ENCODE measurements at regions of chrX and their contacts with region 1.

Region 1: GRCh38 chrX:152632445-152633097 is 5.1 kb upstream of the GABRQ start:
- DNase-seq: peak; percentile 55
- ATAC-seq: no peak
- H3K4me3 Mint-ChIP-seq: no peak overlapping the region
- H3K27ac Mint-ChIP-seq: no peak overlapping the region
- H3K4me1 Mint-ChIP-seq: no peaks in the 10 kb centered on the region
- H3K27me3 Mint-ChIP-seq: peaks cover 7% of the 10 kb centered on the region
- CTCF ChIP-seq: peak; percentile 58

Region 2: DNA sequence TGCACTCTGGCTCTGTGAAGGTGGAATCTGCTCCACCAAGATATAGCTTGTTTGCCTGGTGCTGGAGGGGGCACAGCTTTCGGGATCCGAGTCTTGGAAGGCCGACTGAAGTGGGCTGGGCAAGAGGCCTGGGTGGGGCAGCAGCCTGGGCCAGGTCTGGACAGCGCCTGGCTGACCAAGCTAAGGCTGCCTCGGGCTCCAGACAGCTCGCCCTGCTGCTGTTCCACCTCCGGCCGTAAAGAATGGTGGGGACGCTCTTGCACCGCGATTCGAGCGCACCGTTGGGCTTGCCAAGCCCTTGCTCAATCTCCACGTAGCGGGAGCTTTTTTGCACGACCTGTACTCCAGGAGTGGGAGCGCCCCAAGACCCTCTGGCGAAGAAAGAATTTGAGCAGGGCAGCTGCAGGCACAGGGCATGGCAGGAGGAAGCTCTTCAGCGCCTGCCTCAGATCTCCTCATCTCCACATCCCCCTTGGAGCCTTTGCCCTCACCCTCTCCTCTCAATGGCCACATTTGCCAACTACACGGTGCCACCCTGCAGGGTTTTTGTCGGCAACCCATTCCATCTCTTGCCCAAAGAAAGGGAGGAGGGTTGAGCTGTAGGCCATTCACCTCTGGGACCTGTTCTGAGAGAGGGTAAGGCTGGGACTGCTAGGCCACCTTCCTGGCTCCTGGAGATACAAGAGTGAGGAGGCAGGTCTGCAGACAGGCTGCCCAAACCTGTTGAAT is 879.1 kb before region 1 on chrX:
- CTCF ChIA-PET with region 1: interaction called, 10 read pairs
- POLR2A ChIA-PET with region 1: no interaction called
- intact Hi-C with region 1: no loop called
- DNase-seq: peak; percentile 20
- ATAC-seq: peak; percentile 58
- H3K4me3 Mint-ChIP-seq: no peak overlapping the region
- H3K27ac Mint-ChIP-seq: no peak overlapping the region
- H3K4me1 Mint-ChIP-seq: no peaks in the 10 kb centered on the region
- H3K27me3 Mint-ChIP-seq: peaks cover 3% of the 10 kb centered on the region
- CTCF ChIP-seq: peak; percentile 41

Region 3: DNA sequence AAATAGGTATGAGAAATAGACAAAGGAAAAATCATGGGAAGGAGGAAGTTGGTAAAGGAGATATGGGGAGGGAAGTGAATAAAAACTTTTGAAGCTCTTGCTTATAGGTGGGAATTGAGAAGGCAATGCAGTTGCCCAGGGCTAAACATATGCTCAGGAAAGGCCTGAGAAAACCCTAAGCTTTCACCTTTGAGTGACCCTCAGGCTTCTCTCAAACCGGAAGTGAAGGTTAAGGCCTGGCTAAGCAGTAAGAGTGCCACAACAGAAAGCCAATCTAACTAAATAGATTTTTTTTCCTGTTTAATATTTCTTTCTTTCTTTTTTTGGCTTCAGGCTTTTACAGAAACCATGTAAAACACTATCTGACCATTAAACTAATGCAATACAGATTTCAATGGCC is 111.9 kb before region 1 on chrX:
- CTCF ChIA-PET with region 1: no interaction called
- POLR2A ChIA-PET with region 1: no interaction called
- intact Hi-C with region 1: no loop called
- DNase-seq: no peak
- ATAC-seq: no peak
- H3K4me3 Mint-ChIP-seq: no peak overlapping the region
- H3K27ac Mint-ChIP-seq: no peak overlapping the region
- H3K4me1 Mint-ChIP-seq: no peaks in the 10 kb centered on the region
- H3K27me3 Mint-ChIP-seq: no peaks in the 10 kb centered on the region
- CTCF ChIP-seq: no peak

Region 4: DNA sequence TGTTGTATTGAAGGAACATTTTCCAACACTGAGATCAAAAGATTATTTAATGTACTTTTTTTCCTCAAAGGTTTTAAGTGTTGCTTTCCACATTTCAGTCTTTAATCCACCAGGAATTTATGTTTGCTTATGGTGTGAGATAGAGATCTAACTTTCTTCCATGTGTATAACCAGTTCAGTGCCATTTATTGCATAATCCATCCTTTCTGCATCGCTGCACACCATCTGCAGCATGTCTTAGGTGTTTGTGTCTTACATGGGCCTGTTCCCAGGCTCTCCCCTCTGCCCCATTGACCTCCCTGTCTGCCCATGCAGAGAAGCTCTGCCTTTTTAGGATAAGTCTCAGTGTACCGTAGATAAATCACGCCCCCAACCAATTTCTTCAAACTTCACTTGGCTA is 228.5 kb after region 1 on chrX:
- CTCF ChIA-PET with region 1: no interaction called
- POLR2A ChIA-PET with region 1: no interaction called
- intact Hi-C with region 1: no loop called
- DNase-seq: no peak
- ATAC-seq: no peak
- H3K4me3 Mint-ChIP-seq: no peak overlapping the region
- H3K27ac Mint-ChIP-seq: no peak overlapping the region
- H3K4me1 Mint-ChIP-seq: peaks cover 2% of the 10 kb centered on the region
- H3K27me3 Mint-ChIP-seq: no peaks in the 10 kb centered on the region
- CTCF ChIP-seq: no peak

Measured in activated CD8-positive, alpha-beta T cell treated with anti-CD3 and anti-CD28 coated beads for 36 hours (primary cell).